Endothelial cell of umbilical vein (primary cell): ENCODE measurements at regions of chr14 and their contacts with region 1.

Region 1: GRCh38 chr14:95442633-95443021 is 73.8 kb downstream of the SYNE3 start:
- DNase-seq: peak; percentile 76
- H3K4me3 ChIP-seq: no peak overlapping the region
- H3K27ac ChIP-seq: no peak overlapping the region
- H3K4me1 ChIP-seq: no peaks in the 10 kb centered on the region
- H3K27me3 ChIP-seq: no peaks in the 10 kb centered on the region
- CTCF ChIP-seq: peak; percentile 91
- POLR2A ChIP-seq: no peak

Region 2: GRCh38 chr14:95460647-95461478 is 18.2 kb after region 1 on chr14:
- CTCF ChIA-PET with region 1: interaction called, 40 read pairs
- POLR2A ChIA-PET with region 1: no interaction called
- dilution Hi-C with region 1: no loop called
- intact Hi-C with region 1: no loop called
- DNase-seq: peak; percentile 52
- H3K4me3 ChIP-seq: no peak overlapping the region
- H3K27ac ChIP-seq: no peak overlapping the region
- H3K4me1 ChIP-seq: peaks cover 24% of the 10 kb centered on the region
- H3K27me3 ChIP-seq: no peaks in the 10 kb centered on the region
- CTCF ChIP-seq: no peak
- POLR2A ChIP-seq: no peak

Region 3: GRCh38 chr14:95500772-95501401 is 58.3 kb after region 1 on chr14:
- CTCF ChIA-PET with region 1: interaction called, 11 read pairs
- POLR2A ChIA-PET with region 1: no interaction called
- dilution Hi-C with region 1: no loop called
- intact Hi-C with region 1: no loop called
- DNase-seq: peak; percentile 73
- H3K4me3 ChIP-seq: no peak overlapping the region
- H3K27ac ChIP-seq: peak overlapping the region; percentile 28
- H3K4me1 ChIP-seq: peaks cover 34% of the 10 kb centered on the region
- H3K27me3 ChIP-seq: no peaks in the 10 kb centered on the region
- CTCF ChIP-seq: no peak
- POLR2A ChIP-seq: no peak

Region 4: GRCh38 chr14:95534299-95535225 is 91.9 kb after region 1 on chr14 and contains the start of gene GLRX5:
- CTCF ChIA-PET with region 1: interaction called, 164 read pairs
- POLR2A ChIA-PET with region 1: interaction called, 3 read pairs
- dilution Hi-C with region 1: no loop called
- intact Hi-C with region 1: loop called (anchors 1 kb)
- DNase-seq: peak; percentile 100
- H3K4me3 ChIP-seq: peak within 1 kb of the TSS; percentile 70 to 78 (median 71)
- H3K27ac ChIP-seq: peak within 1 kb of the TSS; percentile 49
- H3K4me1 ChIP-seq: peaks cover 52% of the 10 kb centered on the region
- H3K27me3 ChIP-seq: no peaks in the 10 kb centered on the region
- CTCF ChIP-seq: no peak
- POLR2A ChIP-seq: peak; percentile 65
- total RNA-seq, gene GLRX5: 50.9 and 52.0 TPM in 2 replicates

Region 5: GRCh38 chr14:95683793-95684192 is 241.2 kb after region 1 on chr14:
- CTCF ChIA-PET with region 1: no interaction called
- POLR2A ChIA-PET with region 1: no interaction called
- dilution Hi-C with region 1: no loop called
- intact Hi-C with region 1: loop called (anchors 5 kb)
- DNase-seq: no peak
- H3K4me3 ChIP-seq: no peak overlapping the region
- H3K27ac ChIP-seq: no peak overlapping the region
- H3K4me1 ChIP-seq: no peaks in the 10 kb centered on the region
- H3K27me3 ChIP-seq: no peaks in the 10 kb centered on the region
- CTCF ChIP-seq: peak; percentile 37 to 42
- POLR2A ChIP-seq: no peak